CD8-positive, alpha-beta T cell (primary cell): ENCODE measurements at regions of chrX and their contacts with region 1.

Region 1: DNA sequence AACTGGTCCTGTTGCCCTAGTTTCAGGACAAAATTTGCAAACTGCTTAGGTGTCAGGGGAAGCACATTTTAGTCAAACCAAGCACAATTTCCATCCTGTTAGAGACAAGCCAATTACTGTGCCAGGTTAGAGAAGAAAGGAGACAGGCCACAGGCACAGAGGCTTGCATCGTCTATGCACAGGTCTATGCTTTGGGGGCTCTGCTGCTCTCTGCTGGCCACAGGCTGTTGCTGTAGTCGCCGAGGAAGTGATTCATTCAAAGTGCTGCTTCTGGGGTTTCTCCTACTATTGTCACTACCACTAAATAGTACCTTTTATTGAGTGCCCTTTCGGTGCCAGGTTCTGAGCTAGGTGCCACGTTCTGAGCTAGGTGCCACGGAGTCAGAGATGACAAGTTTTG is 45.5 kb downstream of the VGLL1 start:
- DNase-seq: peak; percentile 30 to 79 (median 62)
- ATAC-seq: peak; percentile 99
- H3K4me3 ChIP-seq: no peak overlapping the region
- H3K4me3 Mint-ChIP-seq: no peak overlapping the region
- H3K27ac ChIP-seq: no peak overlapping the region
- H3K27ac Mint-ChIP-seq: peak overlapping the region; percentile 46
- H3K4me1 ChIP-seq: peaks cover 3% of the 10 kb centered on the region
- H3K4me1 Mint-ChIP-seq: peaks cover 7% of the 10 kb centered on the region
- H3K27me3 ChIP-seq: no peaks in the 10 kb centered on the region
- H3K27me3 Mint-ChIP-seq: no peaks in the 10 kb centered on the region
- CTCF ChIP-seq: peak; percentile 55

Region 2: GRCh38 chrX:136457303-136457917 is 120.1 kb before region 1 on chrX:
- CTCF ChIA-PET with region 1: no interaction called
- POLR2A ChIA-PET with region 1: no interaction called
- intact Hi-C with region 1: no loop called
- DNase-seq: no peak
- ATAC-seq: no peak
- H3K4me3 ChIP-seq: no peak overlapping the region
- H3K4me3 Mint-ChIP-seq: no peak overlapping the region
- H3K27ac ChIP-seq: no peak overlapping the region
- H3K27ac Mint-ChIP-seq: no peak overlapping the region
- H3K4me1 ChIP-seq: no peaks in the 10 kb centered on the region
- H3K4me1 Mint-ChIP-seq: no peaks in the 10 kb centered on the region
- H3K27me3 ChIP-seq: no peaks in the 10 kb centered on the region
- H3K27me3 Mint-ChIP-seq: peaks cover 3% of the 10 kb centered on the region
- CTCF ChIP-seq: no peak

Region 3: DNA sequence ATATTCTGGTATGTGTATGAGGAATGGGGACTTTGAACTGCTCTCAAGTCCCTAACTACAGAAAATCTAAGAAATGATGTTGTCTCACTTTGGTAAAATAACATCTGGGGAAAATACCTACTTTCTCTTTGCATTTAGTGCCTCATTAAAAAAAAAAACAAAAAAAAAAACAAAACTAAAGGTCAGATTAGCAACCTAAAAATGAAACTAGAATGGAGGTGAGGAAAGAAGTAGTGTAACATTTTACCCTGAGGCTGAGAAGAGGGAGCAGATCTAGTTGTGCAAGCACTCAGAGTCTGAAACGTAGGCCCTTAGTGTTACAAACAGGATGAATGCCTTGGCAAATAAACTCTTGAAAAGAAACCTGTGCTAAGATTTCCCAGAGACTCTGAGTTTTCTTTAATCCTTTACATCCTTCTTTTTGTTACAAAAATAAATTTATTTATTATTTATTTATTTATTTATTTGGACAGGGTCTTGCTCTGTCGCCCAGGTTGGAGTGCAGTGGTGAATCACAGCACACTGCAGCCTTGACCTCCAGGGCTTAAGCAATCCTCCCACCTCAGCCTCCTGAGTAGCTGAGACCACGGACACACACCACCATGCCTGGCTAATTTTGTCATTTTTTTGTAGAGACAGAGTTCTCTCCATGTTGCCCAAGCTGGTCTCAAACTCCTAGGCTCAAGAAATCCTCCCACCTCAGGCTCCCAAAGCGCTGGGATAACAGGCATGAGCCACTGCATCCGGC is 10.7 kb after region 1 on chrX:
- CTCF ChIA-PET with region 1: interaction called, 16 read pairs
- POLR2A ChIA-PET with region 1: interaction called, 3 read pairs
- intact Hi-C with region 1: no loop called
- DNase-seq: peak in 2 of 9 experiments; percentile 43 to 71
- ATAC-seq: peak; percentile 38
- H3K4me3 ChIP-seq: no peak overlapping the region
- H3K4me3 Mint-ChIP-seq: peak overlapping the region; percentile 42
- H3K27ac ChIP-seq: peak overlapping the region in 1 of 2 experiments; percentile 76
- H3K27ac Mint-ChIP-seq: peak overlapping the region; percentile 89
- H3K4me1 ChIP-seq: peaks cover 38% of the 10 kb centered on the region
- H3K4me1 Mint-ChIP-seq: peaks cover 48% of the 10 kb centered on the region
- H3K27me3 ChIP-seq: no peaks in the 10 kb centered on the region
- H3K27me3 Mint-ChIP-seq: no peaks in the 10 kb centered on the region
- CTCF ChIP-seq: no peak

Region 4: DNA sequence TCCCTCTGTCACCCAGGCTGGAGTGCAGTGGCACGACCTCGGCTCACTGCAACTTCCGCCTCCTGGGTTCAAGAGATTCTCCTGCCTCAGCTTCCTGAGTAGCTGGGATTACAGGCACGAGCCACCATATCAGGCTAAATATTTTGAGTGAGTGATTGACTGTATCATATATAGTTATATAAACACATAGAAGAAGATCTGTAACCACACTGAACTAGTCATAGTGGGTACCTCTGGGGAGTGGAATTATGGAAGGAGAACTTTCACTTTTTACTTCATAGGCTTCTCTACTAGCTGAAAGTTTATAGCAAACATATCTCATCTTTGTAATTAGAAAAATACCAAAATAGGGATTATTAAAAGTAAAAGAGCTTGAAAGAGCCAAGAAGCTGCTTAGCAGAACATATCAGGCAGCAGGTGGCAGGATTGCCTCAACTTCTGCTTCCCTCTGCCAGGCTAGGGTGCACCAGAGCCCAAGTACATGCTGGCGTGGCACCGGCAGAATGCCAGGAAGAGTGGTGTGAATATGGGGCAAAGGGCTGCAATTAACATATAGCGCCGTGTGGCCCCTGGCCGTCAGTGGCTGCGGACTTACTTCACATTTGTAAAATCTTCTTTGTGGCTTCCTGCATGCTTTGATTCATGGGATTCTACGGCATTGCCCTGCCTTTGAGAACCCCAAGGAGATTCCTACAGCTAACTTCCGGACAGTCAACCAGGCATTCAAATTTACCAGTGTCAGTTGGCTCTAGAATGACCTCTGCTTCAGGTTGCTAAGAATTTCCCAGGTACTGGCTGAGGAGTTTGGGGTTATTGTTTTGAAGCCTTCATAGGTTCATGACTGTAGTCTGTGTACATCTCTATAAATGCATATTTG is 31.0 kb after region 1 on chrX:
- CTCF ChIA-PET with region 1: interaction called, 16 read pairs
- POLR2A ChIA-PET with region 1: no interaction called
- intact Hi-C with region 1: no loop called
- DNase-seq: peak; percentile 16 to 75 (median 52)
- ATAC-seq: peak; percentile 72
- H3K4me3 ChIP-seq: no peak overlapping the region
- H3K4me3 Mint-ChIP-seq: no peak overlapping the region
- H3K27ac ChIP-seq: no peak overlapping the region
- H3K27ac Mint-ChIP-seq: peak overlapping the region; percentile 4
- H3K4me1 ChIP-seq: peaks cover 14% of the 10 kb centered on the region
- H3K4me1 Mint-ChIP-seq: peaks cover 37% of the 10 kb centered on the region
- H3K27me3 ChIP-seq: no peaks in the 10 kb centered on the region
- H3K27me3 Mint-ChIP-seq: no peaks in the 10 kb centered on the region
- CTCF ChIP-seq: peak; percentile 44

Region 5: GRCh38 chrX:136780763-136781162 is 203.2 kb after region 1 on chrX and contains the start of gene ARHGEF6:
- CTCF ChIA-PET with region 1: no interaction called
- POLR2A ChIA-PET with region 1: no interaction called
- intact Hi-C with region 1: loop called in 1 of 2 experiments (anchors 5 kb)
- DNase-seq: peak in 7 of 9 experiments; percentile 0 to 65 (median 36)
- ATAC-seq: peak; percentile 58
- H3K4me3 ChIP-seq: peak within 1 kb of the TSS; percentile 67
- H3K4me3 Mint-ChIP-seq: peak within 1 kb of the TSS; percentile 93
- H3K27ac ChIP-seq: peak within 1 kb of the TSS; percentile 60 to 80
- H3K27ac Mint-ChIP-seq: peak within 1 kb of the TSS; percentile 96
- H3K4me1 ChIP-seq: peaks cover 44% of the 10 kb centered on the region
- H3K4me1 Mint-ChIP-seq: peaks cover 68% of the 10 kb centered on the region
- H3K27me3 ChIP-seq: no peaks in the 10 kb centered on the region
- H3K27me3 Mint-ChIP-seq: no peaks in the 10 kb centered on the region
- CTCF ChIP-seq: no peak
- total RNA-seq, gene ARHGEF6: 32.2 to 33.2 TPM